ENCODE measurements at regions of chr11 and their contacts with region 1.

Region 1: DNA sequence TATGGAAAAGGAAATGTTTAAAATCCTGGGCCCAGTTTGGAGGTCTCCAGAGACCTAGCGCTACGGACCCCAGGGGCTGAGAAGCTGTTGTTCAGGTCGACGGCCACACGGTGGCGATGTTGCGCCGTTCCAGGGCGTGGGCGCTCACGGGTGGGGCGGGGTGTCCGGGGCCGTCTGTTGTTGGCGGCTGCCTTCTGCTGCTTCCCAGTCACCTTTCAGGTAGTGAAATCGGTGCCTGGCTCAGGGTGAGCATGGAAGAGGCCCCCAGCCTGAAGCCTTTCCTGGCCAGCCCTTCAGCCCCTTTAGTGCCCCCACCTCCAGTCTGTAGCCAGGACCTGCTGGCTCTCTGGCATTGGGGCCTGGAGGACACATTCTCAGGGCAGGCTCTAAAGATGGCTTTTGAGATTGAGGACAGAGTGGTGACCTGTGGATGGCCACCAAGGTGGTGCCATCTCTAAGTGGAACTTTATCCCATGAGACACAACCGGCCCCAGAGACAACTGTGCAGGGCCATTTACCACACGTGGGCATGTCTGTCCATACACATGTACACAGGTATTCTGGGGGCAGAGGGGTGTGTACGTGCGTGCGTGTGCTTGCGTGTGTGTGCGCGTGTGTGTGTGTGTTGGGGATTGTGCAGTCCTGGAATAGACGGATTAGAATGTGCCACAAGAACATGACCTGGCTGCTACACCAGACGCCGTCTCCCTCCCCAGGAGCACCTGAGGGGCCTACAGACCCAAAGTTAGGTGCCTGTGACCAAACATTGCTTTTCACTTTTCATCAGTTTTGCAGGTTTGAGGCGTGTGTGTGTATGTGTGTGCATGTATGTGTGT is 53.8 kb downstream of the ST14 start:
- DNase-seq: peak; percentile 41 to 74
- ATAC-seq: peak; percentile 77 to 87 (median 82)
- H3K4me3 ChIP-seq: peak overlapping the region in 1 of 10 donors; percentile 9
- H3K27ac ChIP-seq: no peak overlapping the region
- H3K4me1 ChIP-seq: peaks cover 0 to 10% (median 5%) of the 10 kb centered on the region in 9 donors
- H3K27me3 ChIP-seq: peaks cover 0 to 8% (median 0%) of the 10 kb centered on the region in 7 donors
- CTCF ChIP-seq: peak; percentile 88 to 98 (median 97)

Region 2: GRCh38 chr11:130050257-130050656 is 163.1 kb before region 1 on chr11:
- intact Hi-C with region 1: no loop called
- DNase-seq: peak in 1 of 2 donors; percentile 15
- ATAC-seq: peak in 6 of 8 donors; percentile 56 to 82 (median 72)
- H3K4me3 ChIP-seq: no peak overlapping the region
- H3K27ac ChIP-seq: peak overlapping the region in 1 of 10 donors; percentile 43
- H3K4me1 ChIP-seq: peaks cover 0 to 28% (median 0%) of the 10 kb centered on the region in 9 donors
- H3K27me3 ChIP-seq: no peaks in the 10 kb centered on the region
- CTCF ChIP-seq: no peak

Region 3: GRCh38 chr11:130103296-130103814 is 110.0 kb before region 1 on chr11:
- intact Hi-C with region 1: no loop called
- DNase-seq: no peak
- ATAC-seq: peak in 7 of 8 donors; percentile 38 to 84 (median 60)
- H3K4me3 ChIP-seq: no peak overlapping the region
- H3K27ac ChIP-seq: peak overlapping the region in 2 of 10 donors; percentile 6 to 39
- H3K4me1 ChIP-seq: peaks cover 0 to 54% (median 37%) of the 10 kb centered on the region in 9 donors
- H3K27me3 ChIP-seq: no peaks in the 10 kb centered on the region
- CTCF ChIP-seq: no peak

Region 4: GRCh38 chr11:130403271-130403804 is 190.0 kb after region 1 on chr11:
- intact Hi-C with region 1: loop called in 1 of 10 experiments (anchors 10 kb)
- DNase-seq: peak; percentile 50 to 58
- ATAC-seq: peak; percentile 56 to 86 (median 76)
- H3K4me3 ChIP-seq: no peak overlapping the region
- H3K27ac ChIP-seq: peak overlapping the region in 8 of 10 donors; percentile 7 to 85 (median 66)
- H3K4me1 ChIP-seq: peaks cover 2 to 52% (median 32%) of the 10 kb centered on the region in 9 donors
- H3K27me3 ChIP-seq: no peaks in the 10 kb centered on the region
- CTCF ChIP-seq: no peak

Region 5: DNA sequence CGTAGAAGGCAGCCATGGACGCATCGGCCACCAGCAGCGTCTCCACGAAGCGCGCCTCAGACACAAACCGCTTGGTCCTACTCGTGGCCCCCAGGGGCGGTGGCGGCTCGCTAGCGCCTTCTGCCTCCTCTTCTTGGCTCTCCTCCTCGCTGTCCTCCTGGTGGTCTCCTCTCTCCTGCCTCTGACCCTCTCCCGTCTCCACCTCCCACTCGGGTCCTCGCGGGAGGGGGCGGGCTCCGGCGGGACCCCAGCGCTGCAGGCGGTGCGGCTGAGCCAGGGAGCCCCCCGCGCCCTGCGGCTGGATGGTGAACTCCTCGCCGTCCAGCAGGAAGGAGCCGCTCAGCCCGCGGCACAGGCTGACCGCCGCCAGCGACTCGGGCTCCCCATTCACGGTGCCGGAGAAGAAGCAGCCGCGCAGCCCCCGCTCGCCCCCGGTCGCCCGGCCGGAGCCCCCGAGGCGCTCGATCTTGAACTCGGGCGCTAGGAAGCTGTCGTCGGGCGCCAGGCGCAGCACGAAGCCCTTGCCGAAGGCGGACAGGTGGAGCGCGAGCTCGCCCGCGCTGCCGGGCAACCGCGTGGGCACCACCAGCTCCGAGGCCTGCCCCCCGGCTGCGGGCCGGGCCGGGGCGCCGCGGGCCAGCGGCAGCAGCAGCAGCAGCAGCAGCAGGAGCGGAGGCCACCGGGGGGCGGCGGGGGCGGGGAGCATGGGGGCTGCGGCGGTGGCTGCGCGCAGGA is 214.4 kb after region 1 on chr11:
- intact Hi-C with region 1: loop called (anchors 2 to 10 kb)
- DNase-seq: no peak
- ATAC-seq: peak in 7 of 8 donors; percentile 6 to 33 (median 17)
- H3K4me3 ChIP-seq: peak overlapping the region; percentile 28 to 58 (median 46)
- H3K27ac ChIP-seq: no peak overlapping the region
- H3K4me1 ChIP-seq: peaks cover 5 to 24% (median 18%) of the 10 kb centered on the region in 9 donors
- H3K27me3 ChIP-seq: peaks cover 0 to 65% (median 26%) of the 10 kb centered on the region in 7 donors
- CTCF ChIP-seq: peak in 3 of 9 donors; percentile 30 to 43 (median 36)

Region 6: GRCh38 chr11:130861902-130862860 is 648.8 kb after region 1 on chr11:
- intact Hi-C with region 1: loop called in 4 of 10 experiments (anchors 5 to 10 kb)
- DNase-seq: peak; percentile 89 to 91
- ATAC-seq: peak; percentile 50 to 79 (median 68)
- H3K4me3 ChIP-seq: peak overlapping the region in 1 of 10 donors; percentile 23
- H3K27ac ChIP-seq: peak overlapping the region in 3 of 10 donors; percentile 4 to 53 (median 51)
- H3K4me1 ChIP-seq: peaks cover 0 to 36% (median 16%) of the 10 kb centered on the region in 9 donors
- H3K27me3 ChIP-seq: no peaks in the 10 kb centered on the region
- CTCF ChIP-seq: peak; percentile 100

Region 7: DNA sequence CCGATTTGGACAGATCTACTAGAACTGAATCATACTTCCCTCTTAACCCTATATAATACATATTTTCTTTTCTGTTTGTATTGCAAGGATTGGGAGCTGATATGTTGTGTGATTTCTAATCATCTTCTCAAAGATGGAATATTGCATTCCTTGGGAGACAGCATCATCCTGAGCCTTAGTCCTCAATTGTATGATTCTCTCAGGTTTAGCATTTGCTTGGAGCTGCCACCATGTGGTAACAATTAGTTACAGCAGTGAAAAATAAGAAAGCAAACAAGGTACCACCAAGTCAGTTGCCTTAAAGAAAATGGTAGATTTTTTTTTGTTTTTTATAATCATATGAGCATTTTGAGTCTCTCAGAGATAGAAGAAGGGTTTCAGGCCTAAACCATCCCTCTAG is 691.0 kb after region 1 on chr11:
- intact Hi-C with region 1: loop called in 3 of 10 experiments (anchors 10 kb)
- DNase-seq: no peak
- ATAC-seq: no peak
- H3K4me3 ChIP-seq: no peak overlapping the region
- H3K27ac ChIP-seq: no peak overlapping the region
- H3K4me1 ChIP-seq: peaks cover 0 to 10% (median 0%) of the 10 kb centered on the region in 9 donors
- H3K27me3 ChIP-seq: no peaks in the 10 kb centered on the region
- CTCF ChIP-seq: peak; percentile 12 to 56 (median 41)